ENCODE measurements at regions of chr14 and their contacts with region 1.

Region 1: DNA sequence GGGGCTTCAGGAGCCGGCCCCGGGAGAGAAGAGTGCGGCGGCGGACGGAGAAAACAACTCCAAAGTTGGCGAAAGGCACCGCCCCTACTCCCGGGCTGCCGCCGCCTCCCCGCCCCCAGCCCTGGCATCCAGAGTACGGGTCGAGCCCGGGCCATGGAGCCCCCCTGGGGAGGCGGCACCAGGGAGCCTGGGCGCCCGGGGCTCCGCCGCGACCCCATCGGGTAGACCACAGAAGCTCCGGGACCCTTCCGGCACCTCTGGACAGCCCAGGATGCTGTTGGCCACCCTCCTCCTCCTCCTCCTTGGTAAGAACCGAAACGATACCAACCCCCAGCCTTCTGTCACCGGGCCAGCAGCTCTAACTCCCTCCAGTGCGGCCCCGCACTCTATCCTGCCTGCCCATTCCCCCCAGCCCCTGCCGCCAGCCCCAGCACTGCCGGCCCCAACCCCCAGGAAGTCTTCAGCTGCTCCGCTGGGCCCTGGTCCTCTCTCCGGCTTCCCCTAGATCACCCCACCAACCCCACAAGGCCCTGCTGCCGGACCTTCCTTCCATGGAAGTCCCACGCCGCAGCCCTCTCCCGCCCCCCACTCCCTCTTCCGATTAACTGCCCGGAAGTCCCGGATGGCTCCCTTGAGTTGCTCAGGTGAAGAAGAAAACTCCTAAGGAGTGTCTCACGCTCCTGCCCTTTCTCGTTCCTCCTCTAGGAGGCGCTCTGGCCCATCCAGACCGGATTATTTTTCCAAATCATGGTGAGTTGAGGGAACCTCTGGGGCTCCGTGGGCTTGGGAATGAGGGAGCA is 693 bp downstream of the LRP10 start:
- DNase-seq: peak; percentile 69
- ATAC-seq: peak; percentile 22
- H3K4me3 Mint-ChIP-seq: peak overlapping the region; percentile 89
- H3K27ac Mint-ChIP-seq: peak overlapping the region; percentile 92
- H3K4me1 Mint-ChIP-seq: peaks cover 33% of the 10 kb centered on the region
- H3K27me3 Mint-ChIP-seq: no peaks in the 10 kb centered on the region
- CTCF ChIP-seq: no peak

Region 2: GRCh38 chr14:22811722-22812121 is 60.5 kb before region 1 on chr14:
- CTCF ChIA-PET with region 1: no interaction called
- POLR2A ChIA-PET with region 1: no interaction called
- intact Hi-C with region 1: no loop called
- DNase-seq: no peak
- ATAC-seq: peak; percentile 33
- H3K4me3 Mint-ChIP-seq: peak overlapping the region; percentile 75
- H3K27ac Mint-ChIP-seq: peak overlapping the region; percentile 96
- H3K4me1 Mint-ChIP-seq: peaks cover 79% of the 10 kb centered on the region
- H3K27me3 Mint-ChIP-seq: no peaks in the 10 kb centered on the region
- CTCF ChIP-seq: no peak

Region 3: GRCh38 chr14:22829661-22830442 is 42.4 kb before region 1 on chr14 and contains the start of gene MRPL52:
- CTCF ChIA-PET with region 1: interaction called, 3 read pairs
- POLR2A ChIA-PET with region 1: interaction called, 10 read pairs
- intact Hi-C with region 1: loop called (anchors 1 kb)
- DNase-seq: peak; percentile 76
- ATAC-seq: peak; percentile 94
- H3K4me3 Mint-ChIP-seq: peak within 1 kb of the TSS; percentile 93
- H3K27ac Mint-ChIP-seq: peak within 1 kb of the TSS; percentile 97
- H3K4me1 Mint-ChIP-seq: peaks cover 27% of the 10 kb centered on the region
- H3K27me3 Mint-ChIP-seq: no peaks in the 10 kb centered on the region
- CTCF ChIP-seq: no peak
- total RNA-seq, gene MRPL52: 142 and 150 TPM in 2 replicates

Region 4: DNA sequence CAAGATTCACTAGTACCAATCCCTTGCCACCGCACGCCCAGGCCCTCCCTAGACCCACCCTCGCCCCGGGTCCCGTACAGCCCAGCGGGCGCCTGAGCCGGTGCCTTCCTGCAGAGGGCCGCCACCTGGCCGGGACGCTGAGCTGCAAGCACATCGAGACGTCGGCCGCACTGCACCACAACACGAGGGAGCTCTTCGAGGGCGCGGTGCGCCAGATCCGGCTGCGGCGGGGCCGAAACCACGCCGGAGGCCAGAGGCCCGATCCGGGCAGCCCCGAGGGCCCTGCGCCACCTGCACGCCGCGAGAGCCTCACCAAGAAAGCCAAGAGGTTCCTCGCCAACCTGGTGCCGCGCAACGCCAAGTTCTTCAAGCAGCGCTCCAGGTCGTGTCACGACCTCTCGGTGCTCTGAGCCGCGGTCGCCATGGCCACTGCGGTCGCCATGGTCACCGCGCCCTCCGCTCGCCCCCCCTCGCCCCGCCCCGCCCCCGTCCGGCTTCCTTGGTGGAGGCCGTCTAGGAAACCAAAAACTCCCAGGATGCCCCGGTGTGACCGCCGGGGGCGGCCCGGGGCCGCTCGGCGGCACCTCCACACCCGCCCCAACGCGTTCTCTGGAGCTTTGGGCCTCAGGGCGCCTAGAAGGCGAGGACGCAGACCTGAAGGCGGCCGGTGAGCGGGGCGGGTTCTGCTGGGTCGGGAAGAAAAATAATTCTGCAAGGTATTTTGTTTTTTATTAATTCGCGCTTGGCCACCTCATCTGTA is 14.4 kb after region 1 on chr14:
- CTCF ChIA-PET with region 1: interaction called, 103 read pairs
- POLR2A ChIA-PET with region 1: interaction called, 140 read pairs
- intact Hi-C with region 1: loop called (anchors 1 kb)
- DNase-seq: peak; percentile 71
- ATAC-seq: peak; percentile 55
- H3K4me3 Mint-ChIP-seq: peak overlapping the region; percentile 90
- H3K27ac Mint-ChIP-seq: peak overlapping the region; percentile 97
- H3K4me1 Mint-ChIP-seq: peaks cover 80% of the 10 kb centered on the region
- H3K27me3 Mint-ChIP-seq: no peaks in the 10 kb centered on the region
- CTCF ChIP-seq: no peak

Region 5: GRCh38 chr14:22900081-22900799 is 28.0 kb after region 1 on chr14:
- CTCF ChIA-PET with region 1: interaction called, 70 read pairs
- POLR2A ChIA-PET with region 1: interaction called, 11 read pairs
- intact Hi-C with region 1: loop called (anchors 1 kb)
- DNase-seq: no peak
- ATAC-seq: peak; percentile 91
- H3K4me3 Mint-ChIP-seq: no peak overlapping the region
- H3K27ac Mint-ChIP-seq: peak overlapping the region; percentile 43
- H3K4me1 Mint-ChIP-seq: peaks cover 5% of the 10 kb centered on the region
- H3K27me3 Mint-ChIP-seq: no peaks in the 10 kb centered on the region
- CTCF ChIP-seq: no peak

Region 6: GRCh38 chr14:22918804-22919600 is 46.8 kb after region 1 on chr14 and contains the start of gene RBM23:
- CTCF ChIA-PET with region 1: interaction called, 9 read pairs
- POLR2A ChIA-PET with region 1: interaction called, 30 read pairs
- intact Hi-C with region 1: loop called (anchors 1 kb)
- DNase-seq: peak; percentile 94
- ATAC-seq: peak; percentile 94
- H3K4me3 Mint-ChIP-seq: peak within 1 kb of the TSS; percentile 99
- H3K27ac Mint-ChIP-seq: peak within 1 kb of the TSS; percentile 100
- H3K4me1 Mint-ChIP-seq: peaks cover 53% of the 10 kb centered on the region
- H3K27me3 Mint-ChIP-seq: no peaks in the 10 kb centered on the region
- CTCF ChIP-seq: no peak
- total RNA-seq, gene RBM23: 130 and 131 TPM in 2 replicates

Region 7: GRCh38 chr14:22929104-22929847 is 57.0 kb after region 1 on chr14 and contains the start of gene PRMT5:
- CTCF ChIA-PET with region 1: interaction called, 3 read pairs
- POLR2A ChIA-PET with region 1: interaction called, 14 read pairs
- intact Hi-C with region 1: loop called (anchors 1 kb)
- DNase-seq: peak; percentile 83
- ATAC-seq: peak; percentile 93
- H3K4me3 Mint-ChIP-seq: no peak within 1 kb of the TSS
- H3K27ac Mint-ChIP-seq: no peak within 1 kb of the TSS
- H3K4me1 Mint-ChIP-seq: peaks cover 14% of the 10 kb centered on the region
- H3K27me3 Mint-ChIP-seq: no peaks in the 10 kb centered on the region
- CTCF ChIP-seq: no peak
- total RNA-seq, gene PRMT5: 75.3 and 96.5 TPM in 2 replicates

Region 8: DNA sequence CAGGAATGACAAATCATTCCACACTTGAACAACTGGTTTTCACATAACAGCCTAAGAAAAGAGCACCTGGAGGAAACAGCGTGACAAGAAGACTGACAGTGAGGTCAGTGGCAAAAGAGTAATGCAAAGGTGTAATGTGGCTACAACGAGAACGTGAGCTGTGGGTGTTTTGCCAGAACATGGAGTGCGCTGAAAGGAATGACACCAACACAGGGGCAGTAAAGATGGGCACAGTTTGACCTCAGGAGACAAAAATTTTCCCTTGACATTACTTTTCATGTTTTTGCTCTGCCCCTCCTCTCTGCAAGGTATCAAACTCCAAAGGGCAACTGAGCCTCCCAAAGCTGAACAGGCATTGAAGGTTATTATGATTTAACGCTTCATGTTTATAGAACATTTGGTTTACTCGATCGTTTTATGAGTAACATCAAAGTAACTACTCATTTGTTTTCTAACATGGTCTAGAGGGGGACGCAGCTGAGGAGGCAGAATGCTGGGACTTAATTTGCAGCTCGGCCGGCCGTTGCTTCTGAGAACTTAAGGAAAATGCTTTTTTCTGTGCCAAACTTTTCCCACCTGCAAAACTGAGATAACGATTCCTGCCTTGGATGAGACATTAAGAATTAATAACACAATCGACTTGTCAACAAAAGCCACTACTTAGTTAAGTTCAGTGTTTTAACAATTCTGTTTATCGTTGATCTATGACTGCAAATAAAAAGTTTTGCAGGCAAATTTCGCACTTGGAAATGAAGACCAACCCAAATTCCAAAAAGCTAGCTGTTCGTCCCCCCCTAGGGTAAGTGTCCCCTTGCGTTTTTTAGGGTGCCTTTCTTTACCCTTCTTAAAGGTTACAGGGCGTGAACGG is 83.7 kb after region 1 on chr14:
- CTCF ChIA-PET with region 1: interaction called, 4 read pairs
- POLR2A ChIA-PET with region 1: interaction called, 6 read pairs
- intact Hi-C with region 1: loop called (anchors 1 kb)
- DNase-seq: no peak
- ATAC-seq: no peak
- H3K4me3 Mint-ChIP-seq: peak overlapping the region; percentile 90
- H3K27ac Mint-ChIP-seq: peak overlapping the region; percentile 86
- H3K4me1 Mint-ChIP-seq: peaks cover 13% of the 10 kb centered on the region
- H3K27me3 Mint-ChIP-seq: no peaks in the 10 kb centered on the region
- CTCF ChIP-seq: no peak

Measured in activated B cell treated with CpG ODN at 0.5 μM for 24 hours (primary cell).